Endothelial cell of umbilical vein (primary cell): ENCODE measurements at regions of chr1 and their contacts with region 1.

Region 1: DNA sequence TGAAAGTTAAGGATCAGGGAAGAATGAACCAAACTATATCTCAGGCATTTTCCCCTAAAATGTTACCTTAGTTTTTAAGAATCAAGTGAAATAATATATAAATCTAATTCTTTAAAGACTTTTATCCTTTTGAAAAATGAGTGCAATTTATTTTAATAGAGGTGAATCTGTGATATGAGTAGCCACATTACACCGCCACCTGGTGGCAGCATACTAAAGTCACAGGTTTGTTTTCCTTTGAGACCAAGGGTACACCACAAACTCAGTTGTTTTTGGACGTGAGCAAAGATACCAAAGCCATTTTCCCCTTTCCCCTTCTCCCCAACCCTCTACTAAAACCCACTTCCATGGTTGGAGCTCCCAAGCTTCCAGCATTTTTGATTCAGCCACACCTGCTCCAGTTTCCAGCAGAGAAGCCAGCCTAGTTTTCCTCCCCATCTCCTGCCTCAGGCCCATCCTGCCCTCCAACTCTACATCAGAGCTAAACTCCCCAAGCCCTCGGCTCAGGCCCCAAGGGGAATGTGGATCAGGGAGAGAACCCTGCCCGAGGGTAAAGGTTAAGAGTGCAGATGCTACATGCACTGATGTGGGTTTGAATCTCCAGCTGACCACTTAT is 22.9 kb upstream of the LDLRAP1 start:
- DNase-seq: peak; percentile 57
- H3K4me3 ChIP-seq: no peak overlapping the region
- H3K27ac ChIP-seq: no peak overlapping the region
- H3K4me1 ChIP-seq: no peaks in the 10 kb centered on the region
- H3K27me3 ChIP-seq: peaks cover 0 to 2% of the 10 kb centered on the region in 2 experiments
- CTCF ChIP-seq: peak; percentile 61 to 67
- POLR2A ChIP-seq: no peak

Region 2: DNA sequence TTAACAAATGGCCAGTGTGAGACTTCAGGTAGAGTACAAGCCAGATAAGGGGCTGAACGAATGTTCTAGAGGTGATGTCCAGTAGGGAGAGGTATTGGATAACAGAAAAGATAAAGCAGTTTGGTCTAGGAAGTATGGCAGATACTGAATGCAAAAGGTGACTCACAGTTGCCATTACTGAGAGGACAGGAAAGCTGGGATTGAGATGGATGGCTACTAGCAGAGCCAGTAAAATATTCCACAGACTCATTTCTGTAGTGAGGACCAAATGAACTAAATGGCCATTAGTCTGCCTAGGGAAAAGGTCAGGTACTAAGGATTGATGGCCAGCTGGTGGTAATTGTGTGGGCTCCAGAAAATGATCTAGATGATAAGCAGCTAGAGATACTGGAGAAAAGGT is 78.4 kb before region 1 on chr1:
- CTCF ChIA-PET with region 1: interaction called, 20 read pairs
- POLR2A ChIA-PET with region 1: no interaction called
- dilution Hi-C with region 1: no loop called
- intact Hi-C with region 1: no loop called
- DNase-seq: peak; percentile 81
- H3K4me3 ChIP-seq: no peak overlapping the region
- H3K27ac ChIP-seq: no peak overlapping the region
- H3K4me1 ChIP-seq: peaks cover 6% of the 10 kb centered on the region
- H3K27me3 ChIP-seq: no peaks in the 10 kb centered on the region
- CTCF ChIP-seq: no peak
- POLR2A ChIP-seq: no peak

Region 3: DNA sequence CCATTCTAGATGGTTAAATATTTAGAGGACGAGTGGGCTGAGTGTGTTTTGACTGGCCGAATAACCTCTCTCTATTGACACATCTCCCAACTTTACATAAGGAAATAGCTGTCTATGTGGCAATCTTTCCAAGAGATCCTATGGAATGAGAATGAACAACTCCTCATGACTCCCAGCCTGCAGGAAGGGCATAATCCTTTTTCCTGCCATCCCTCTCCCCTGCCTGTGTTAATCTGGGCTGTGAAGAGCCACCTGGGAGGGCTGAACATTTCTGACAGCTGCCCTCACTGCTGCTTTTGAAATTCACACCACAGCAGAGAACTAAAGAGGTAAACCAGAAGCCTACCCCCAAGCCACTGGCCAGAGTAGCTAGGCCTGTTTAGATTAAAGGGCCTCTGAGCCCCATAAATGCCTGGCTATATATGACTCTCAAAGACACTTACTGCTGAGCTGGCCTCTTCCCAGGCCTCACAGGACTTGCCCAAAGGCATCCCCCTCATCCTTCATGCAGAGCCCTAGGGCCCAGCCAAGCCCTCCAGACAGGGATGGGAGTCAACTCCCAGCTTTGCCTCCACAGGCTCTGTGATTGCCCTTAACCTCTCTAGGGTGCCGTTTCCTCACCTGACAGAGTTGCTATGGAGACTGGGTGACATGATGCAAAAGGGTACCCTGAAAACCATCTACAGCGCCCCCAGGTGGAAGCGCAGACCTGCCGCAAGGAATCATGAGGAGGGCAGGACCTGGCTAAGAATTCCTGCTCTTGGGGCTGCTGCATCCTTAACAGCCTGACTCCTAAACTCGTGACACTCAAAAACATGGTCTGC is 19.1 kb before region 1 on chr1:
- CTCF ChIA-PET with region 1: interaction called, 14 read pairs
- POLR2A ChIA-PET with region 1: no interaction called
- dilution Hi-C with region 1: no loop called
- intact Hi-C with region 1: no loop called
- DNase-seq: no peak
- H3K4me3 ChIP-seq: no peak overlapping the region
- H3K27ac ChIP-seq: no peak overlapping the region
- H3K4me1 ChIP-seq: no peaks in the 10 kb centered on the region
- H3K27me3 ChIP-seq: no peaks in the 10 kb centered on the region
- CTCF ChIP-seq: peak; percentile 24 to 28
- POLR2A ChIP-seq: no peak

Region 4: GRCh38 chr1:25590096-25590824 is 69.7 kb after region 1 on chr1:
- CTCF ChIA-PET with region 1: no interaction called
- POLR2A ChIA-PET with region 1: no interaction called
- dilution Hi-C with region 1: no loop called
- intact Hi-C with region 1: no loop called
- DNase-seq: peak; percentile 34
- H3K4me3 ChIP-seq: no peak overlapping the region
- H3K27ac ChIP-seq: no peak overlapping the region
- H3K4me1 ChIP-seq: no peaks in the 10 kb centered on the region
- H3K27me3 ChIP-seq: peaks cover 0 to 2% of the 10 kb centered on the region in 2 experiments
- CTCF ChIP-seq: peak in 1 of 2 donors; percentile 8
- POLR2A ChIP-seq: no peak